Activated B cell treated with CpG ODN at 0.5 μM for 24 hours (primary cell): ENCODE measurements at regions of chr2 and their contacts with region 1.

Region 1: GRCh38 chr2:25567406-25567805 is 106.0 kb downstream of the DTNB start:
- DNase-seq: no peak
- ATAC-seq: peak; percentile 53
- H3K4me3 Mint-ChIP-seq: no peak overlapping the region
- H3K27ac Mint-ChIP-seq: no peak overlapping the region
- H3K4me1 Mint-ChIP-seq: peaks cover 27% of the 10 kb centered on the region
- H3K27me3 Mint-ChIP-seq: no peaks in the 10 kb centered on the region
- CTCF ChIP-seq: no peak

Region 2: GRCh38 chr2:24409700-24410556 is 1157.5 kb before region 1 on chr2:
- CTCF ChIA-PET with region 1: no interaction called
- POLR2A ChIA-PET with region 1: no interaction called
- intact Hi-C with region 1: loop called (anchors 5 kb)
- DNase-seq: no peak
- ATAC-seq: peak; percentile 79
- H3K4me3 Mint-ChIP-seq: no peak overlapping the region
- H3K27ac Mint-ChIP-seq: no peak overlapping the region
- H3K4me1 Mint-ChIP-seq: no peaks in the 10 kb centered on the region
- H3K27me3 Mint-ChIP-seq: peaks cover 11% of the 10 kb centered on the region
- CTCF ChIP-seq: peak; percentile 86

Region 3: GRCh38 chr2:25078171-25079049 is 489.0 kb before region 1 on chr2:
- CTCF ChIA-PET with region 1: no interaction called
- POLR2A ChIA-PET with region 1: no interaction called
- intact Hi-C with region 1: no loop called
- DNase-seq: no peak
- ATAC-seq: no peak
- H3K4me3 Mint-ChIP-seq: no peak overlapping the region
- H3K27ac Mint-ChIP-seq: no peak overlapping the region
- H3K4me1 Mint-ChIP-seq: peaks cover 5% of the 10 kb centered on the region
- H3K27me3 Mint-ChIP-seq: peaks cover 7% of the 10 kb centered on the region
- CTCF ChIP-seq: no peak

Region 4: GRCh38 chr2:25201265-25201664 is 366.1 kb before region 1 on chr2:
- CTCF ChIA-PET with region 1: no interaction called
- POLR2A ChIA-PET with region 1: no interaction called
- intact Hi-C with region 1: loop called (anchors 1 kb)
- DNase-seq: no peak
- ATAC-seq: no peak
- H3K4me3 Mint-ChIP-seq: no peak overlapping the region
- H3K27ac Mint-ChIP-seq: no peak overlapping the region
- H3K4me1 Mint-ChIP-seq: peaks cover 24% of the 10 kb centered on the region
- H3K27me3 Mint-ChIP-seq: no peaks in the 10 kb centered on the region
- CTCF ChIP-seq: no peak

Region 5: GRCh38 chr2:25215948-25216679 is 351.3 kb before region 1 on chr2:
- CTCF ChIA-PET with region 1: no interaction called
- POLR2A ChIA-PET with region 1: no interaction called
- intact Hi-C with region 1: loop called (anchors 5 kb)
- DNase-seq: peak; percentile 85
- ATAC-seq: peak; percentile 94
- H3K4me3 Mint-ChIP-seq: peak overlapping the region; percentile 72
- H3K27ac Mint-ChIP-seq: peak overlapping the region; percentile 32
- H3K4me1 Mint-ChIP-seq: peaks cover 21% of the 10 kb centered on the region
- H3K27me3 Mint-ChIP-seq: no peaks in the 10 kb centered on the region
- CTCF ChIP-seq: no peak

Region 6: DNA sequence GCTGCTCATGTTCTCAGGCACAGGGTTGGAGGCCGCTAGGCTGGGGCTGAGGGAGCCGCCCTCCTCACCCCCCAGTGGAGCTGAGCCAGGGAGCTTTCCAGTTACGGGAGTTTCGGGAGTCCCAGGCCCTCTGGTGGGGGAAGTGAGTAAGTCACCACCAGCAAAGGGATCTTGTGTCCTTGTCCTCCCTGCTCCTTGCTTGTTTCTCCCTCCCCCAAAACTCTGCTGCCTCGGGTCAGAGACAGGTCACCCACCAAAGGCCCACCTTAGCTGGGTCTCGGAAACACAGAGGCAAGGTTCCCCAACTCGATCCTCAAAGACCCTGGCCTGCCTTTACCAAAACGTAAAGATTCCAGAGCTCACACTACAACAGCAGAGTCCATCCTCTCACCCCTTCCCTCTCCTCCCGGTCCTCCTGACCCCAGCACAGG is 338.5 kb before region 1 on chr2:
- CTCF ChIA-PET with region 1: no interaction called
- POLR2A ChIA-PET with region 1: no interaction called
- intact Hi-C with region 1: loop called (anchors 1 kb)
- DNase-seq: no peak
- ATAC-seq: peak; percentile 59
- H3K4me3 Mint-ChIP-seq: no peak overlapping the region
- H3K27ac Mint-ChIP-seq: no peak overlapping the region
- H3K4me1 Mint-ChIP-seq: peaks cover 18% of the 10 kb centered on the region
- H3K27me3 Mint-ChIP-seq: no peaks in the 10 kb centered on the region
- CTCF ChIP-seq: no peak

Region 7: GRCh38 chr2:25309402-25309801 is 258.0 kb before region 1 on chr2:
- CTCF ChIA-PET with region 1: interaction called, 13 read pairs
- POLR2A ChIA-PET with region 1: no interaction called
- intact Hi-C with region 1: loop called (anchors 1 kb)
- DNase-seq: peak; percentile 46
- ATAC-seq: peak; percentile 71
- H3K4me3 Mint-ChIP-seq: no peak overlapping the region
- H3K27ac Mint-ChIP-seq: no peak overlapping the region
- H3K4me1 Mint-ChIP-seq: peaks cover 16% of the 10 kb centered on the region
- H3K27me3 Mint-ChIP-seq: no peaks in the 10 kb centered on the region
- CTCF ChIP-seq: no peak

Region 8: DNA sequence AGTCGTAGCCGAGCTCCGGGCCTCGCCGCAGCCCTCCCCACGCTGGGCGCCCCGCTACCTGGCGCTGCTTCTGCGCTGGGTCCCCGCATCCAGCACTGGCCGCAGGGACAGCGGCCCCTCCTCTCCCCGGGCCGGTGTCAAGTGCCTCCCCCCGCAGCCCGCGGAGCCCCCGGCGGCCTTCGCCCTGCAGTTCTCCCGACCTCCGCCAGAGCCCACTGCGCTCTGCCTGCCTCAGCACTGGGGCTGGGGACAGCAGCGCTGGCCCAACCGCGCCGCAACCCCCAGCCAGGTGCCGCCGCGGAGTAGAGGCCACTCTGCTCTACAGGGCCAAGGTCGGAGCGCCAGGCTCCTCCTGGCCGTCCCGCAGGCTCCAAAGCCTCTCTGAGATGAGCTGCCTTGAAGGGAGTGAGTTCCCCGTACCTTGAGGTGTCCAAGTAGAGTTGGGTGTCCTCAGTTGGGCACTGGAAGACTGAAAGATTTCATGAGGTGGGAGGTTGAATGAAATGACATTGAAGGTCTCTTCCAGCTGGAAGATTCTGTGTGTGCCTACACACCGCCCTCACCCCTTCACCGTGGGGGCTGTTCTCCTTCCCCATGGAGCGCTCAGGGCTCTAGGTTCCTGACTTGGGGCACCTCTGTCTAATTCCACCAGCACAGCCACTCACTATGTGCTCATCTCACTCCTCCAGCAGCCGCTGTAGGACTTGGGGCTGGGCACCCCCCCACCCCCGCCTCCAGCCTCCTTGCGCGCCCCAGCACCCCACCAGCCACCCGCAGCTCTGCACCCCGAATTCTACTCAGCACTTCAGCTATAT is 224.8 kb before region 1 on chr2:
- CTCF ChIA-PET with region 1: interaction called, 9 read pairs
- POLR2A ChIA-PET with region 1: interaction called, 5 read pairs
- intact Hi-C with region 1: loop called (anchors 1 kb)
- DNase-seq: peak; percentile 82
- ATAC-seq: peak; percentile 92
- H3K4me3 Mint-ChIP-seq: peak overlapping the region; percentile 84
- H3K27ac Mint-ChIP-seq: peak overlapping the region; percentile 59
- H3K4me1 Mint-ChIP-seq: peaks cover 19% of the 10 kb centered on the region
- H3K27me3 Mint-ChIP-seq: peaks cover 1% of the 10 kb centered on the region
- CTCF ChIP-seq: peak; percentile 74

Region 9: GRCh38 chr2:25437881-25438662 is 129.3 kb before region 1 on chr2:
- CTCF ChIA-PET with region 1: no interaction called
- POLR2A ChIA-PET with region 1: no interaction called
- intact Hi-C with region 1: no loop called
- DNase-seq: no peak
- ATAC-seq: no peak
- H3K4me3 Mint-ChIP-seq: no peak overlapping the region
- H3K27ac Mint-ChIP-seq: no peak overlapping the region
- H3K4me1 Mint-ChIP-seq: peaks cover 20% of the 10 kb centered on the region
- H3K27me3 Mint-ChIP-seq: no peaks in the 10 kb centered on the region
- CTCF ChIP-seq: no peak

Region 10: GRCh38 chr2:25632396-25632795 is 65.0 kb after region 1 on chr2:
- CTCF ChIA-PET with region 1: no interaction called
- POLR2A ChIA-PET with region 1: no interaction called
- intact Hi-C with region 1: no loop called
- DNase-seq: no peak
- ATAC-seq: no peak
- H3K4me3 Mint-ChIP-seq: no peak overlapping the region
- H3K27ac Mint-ChIP-seq: no peak overlapping the region
- H3K4me1 Mint-ChIP-seq: peaks cover 2% of the 10 kb centered on the region
- H3K27me3 Mint-ChIP-seq: no peaks in the 10 kb centered on the region
- CTCF ChIP-seq: no peak